Aorta (tissue), 5 donors: ENCODE measurements at regions of chr2 and their contacts with region 1.

Region 1: DNA sequence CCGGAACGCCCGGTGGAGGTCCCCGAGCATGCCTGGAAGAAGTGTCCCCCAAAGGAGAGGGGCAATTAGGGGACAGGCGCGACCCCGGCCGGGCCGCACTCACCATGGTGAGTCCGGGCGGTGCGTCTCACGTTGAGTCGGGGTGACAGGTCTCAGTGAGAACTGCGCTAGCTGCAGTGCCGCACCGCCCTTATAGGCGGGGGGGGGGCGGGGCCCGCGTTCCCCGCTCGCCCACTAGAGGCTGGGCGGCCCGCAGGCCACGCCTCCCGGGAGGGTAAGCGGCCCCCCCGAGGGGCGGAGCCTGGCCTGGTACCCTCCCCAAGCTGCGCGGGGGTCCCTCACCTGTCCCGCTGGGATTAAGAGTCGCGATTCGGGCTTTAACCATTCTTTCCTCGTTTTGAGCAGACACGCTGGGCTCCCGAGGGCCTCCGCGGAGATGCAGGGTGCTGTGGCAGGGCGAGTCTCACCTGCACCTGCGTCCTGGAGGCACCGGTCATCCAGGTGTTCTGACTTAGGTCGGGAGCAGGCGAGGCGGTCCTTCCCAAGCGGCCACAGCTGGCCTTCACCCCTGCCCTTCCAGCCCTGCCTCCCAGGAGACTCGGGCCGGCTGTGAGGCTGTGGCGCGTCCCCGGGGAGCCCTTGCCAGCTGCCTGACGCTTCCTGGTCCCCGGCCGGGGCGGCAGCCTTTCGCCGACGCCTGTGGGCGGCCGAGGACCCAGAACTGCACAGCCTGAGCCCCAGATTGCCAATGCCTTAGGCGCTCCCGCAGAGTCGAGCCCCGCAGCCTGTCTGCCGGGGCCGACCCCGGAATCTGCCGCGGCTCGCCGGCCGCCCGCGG is at the start of gene TUBA4A:
- DNase-seq: peak; percentile 90 to 95
- ATAC-seq: peak; percentile 93
- H3K4me3 ChIP-seq: peak within 1 kb of the TSS; percentile 75 to 76
- H3K27ac ChIP-seq: peak within 1 kb of the TSS; percentile 8 to 76
- H3K4me1 ChIP-seq: no peaks in the 10 kb centered on the region
- H3K27me3 ChIP-seq: no peaks in the 10 kb centered on the region
- total RNA-seq, gene TUBA4A: 44.3 to 59.2 TPM

Region 2: DNA sequence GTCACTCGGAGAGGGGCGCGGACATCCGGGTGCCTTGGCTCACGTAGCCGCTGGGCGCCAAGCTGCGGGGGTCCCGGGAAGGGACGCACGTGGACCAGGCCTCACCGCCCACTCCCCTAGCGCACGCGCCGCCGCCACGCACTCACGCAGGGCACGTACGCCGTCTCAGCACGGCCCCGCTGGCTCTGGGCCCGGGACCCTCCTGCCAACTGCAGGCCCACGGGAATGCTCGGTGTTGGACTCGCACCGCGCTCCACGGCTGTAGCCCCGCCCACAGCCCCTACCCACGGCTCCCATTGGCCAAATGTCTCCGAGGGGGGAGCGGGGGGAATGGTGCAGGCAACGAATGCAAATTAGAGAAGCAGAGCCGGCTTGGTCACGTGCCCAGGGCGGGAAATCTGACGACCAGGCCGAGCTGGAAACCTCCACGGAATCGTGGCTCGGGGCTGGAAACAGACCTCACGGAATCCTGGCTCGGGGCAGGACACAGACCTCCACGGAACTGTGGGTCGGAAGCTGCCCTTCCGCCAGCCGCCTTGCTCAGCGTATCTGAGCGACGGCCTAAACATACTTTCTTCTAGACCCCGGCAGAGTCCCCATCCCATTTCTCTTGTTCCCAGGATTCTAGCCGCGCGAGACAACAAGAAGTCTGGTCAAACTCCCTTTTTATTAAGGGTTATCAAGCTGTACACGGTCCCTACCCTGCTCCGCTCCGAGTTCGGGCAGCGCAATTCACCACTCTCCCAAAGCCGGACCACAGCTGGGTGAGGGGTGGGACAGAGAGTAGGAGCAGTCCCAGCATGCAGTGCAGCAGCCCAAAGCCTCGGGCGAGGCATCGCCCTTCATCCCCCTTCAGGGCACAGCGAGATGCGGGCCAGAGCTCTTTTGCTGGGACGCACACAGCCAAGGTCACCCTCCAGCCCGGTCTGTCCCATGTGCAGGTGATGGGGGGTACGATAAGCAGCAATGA is 35.0 kb before region 1 on chr2 and contains the start of gene ABCB6:
- intact Hi-C with region 1: loop called in 1 of 2 experiments (anchors 2 kb)
- DNase-seq: peak; percentile 98 to 99
- ATAC-seq: peak; percentile 95
- H3K4me3 ChIP-seq: peak within 1 kb of the TSS; percentile 1 to 31
- H3K27ac ChIP-seq: peak within 1 kb of the TSS in 1 of 2 donors; percentile 96
- H3K4me1 ChIP-seq: no peaks in the 10 kb centered on the region
- H3K27me3 ChIP-seq: no peaks in the 10 kb centered on the region
- total RNA-seq, gene ABCB6: 16.9 to 28.9 TPM

Region 3: GRCh38 chr2:219278655-219279516 is 24.9 kb after region 1 on chr2 and contains the start of gene DNAJB2:
- intact Hi-C with region 1: loop called in 1 of 2 experiments (anchors 2 kb)
- DNase-seq: peak; percentile 100
- ATAC-seq: peak; percentile 97
- H3K4me3 ChIP-seq: peak within 1 kb of the TSS; percentile 45 to 46
- H3K27ac ChIP-seq: peak within 1 kb of the TSS; percentile 53 to 76
- H3K4me1 ChIP-seq: peaks cover 0 to 4% of the 10 kb centered on the region in 2 donors
- H3K27me3 ChIP-seq: no peaks in the 10 kb centered on the region
- total RNA-seq, gene DNAJB2: 54.4 to 54.7 TPM